AG04450 (cell line): ENCODE measurements at regions of chr6 and their contacts with region 1.

Region 1: GRCh38 chr6:43769526-43770416 is at the start of gene VEGFA:
- DNase-seq: peak; percentile 70
- H3K4me3 ChIP-seq: peak within 1 kb of the TSS; percentile 96
- H3K27ac ChIP-seq: peak within 1 kb of the TSS; percentile 85
- H3K27me3 ChIP-seq: no peaks in the 10 kb centered on the region
- CTCF ChIP-seq: peak; percentile 99
- polyA plus RNA-seq, gene VEGFA: 189 and 239 TPM in 2 replicates

Region 2: DNA sequence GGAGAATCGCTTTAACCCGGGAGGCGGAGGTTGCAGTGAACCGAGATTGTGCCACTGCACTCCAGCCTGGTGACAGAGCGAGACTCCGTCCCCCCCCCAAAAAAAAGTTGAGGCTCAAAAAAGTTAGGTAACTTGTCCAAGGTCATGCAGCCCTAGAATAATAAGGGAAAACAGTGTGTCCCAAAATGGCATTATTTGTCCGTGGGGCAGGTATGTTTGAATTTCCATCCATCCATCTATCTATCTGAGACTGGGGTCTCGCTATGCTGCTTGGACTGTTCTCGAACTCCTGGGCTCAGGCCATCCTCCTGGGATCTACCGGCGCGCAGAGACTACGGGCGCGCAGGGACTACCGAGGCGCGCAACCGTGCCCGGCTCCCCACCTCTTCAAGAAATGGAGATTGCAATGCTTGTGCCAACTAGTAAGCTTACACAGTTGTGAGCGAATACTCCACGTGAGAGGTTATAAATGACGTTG is 342.8 kb before region 1 on chr6:
- CTCF ChIA-PET with region 1: no interaction called
- POLR2A ChIA-PET with region 1: no interaction called
- DNase-seq: no peak
- H3K4me3 ChIP-seq: peak overlapping the region; percentile 99
- H3K27ac ChIP-seq: peak overlapping the region; percentile 90
- H3K27me3 ChIP-seq: no peaks in the 10 kb centered on the region
- CTCF ChIP-seq: no peak

Region 3: GRCh38 chr6:43608310-43608763 is 161.4 kb before region 1 on chr6:
- CTCF ChIA-PET with region 1: interaction called, 11 read pairs
- POLR2A ChIA-PET with region 1: no interaction called
- DNase-seq: peak; percentile 61
- H3K4me3 ChIP-seq: no peak overlapping the region
- H3K27ac ChIP-seq: no peak overlapping the region
- H3K27me3 ChIP-seq: no peaks in the 10 kb centered on the region
- CTCF ChIP-seq: peak; percentile 93

Region 4: DNA sequence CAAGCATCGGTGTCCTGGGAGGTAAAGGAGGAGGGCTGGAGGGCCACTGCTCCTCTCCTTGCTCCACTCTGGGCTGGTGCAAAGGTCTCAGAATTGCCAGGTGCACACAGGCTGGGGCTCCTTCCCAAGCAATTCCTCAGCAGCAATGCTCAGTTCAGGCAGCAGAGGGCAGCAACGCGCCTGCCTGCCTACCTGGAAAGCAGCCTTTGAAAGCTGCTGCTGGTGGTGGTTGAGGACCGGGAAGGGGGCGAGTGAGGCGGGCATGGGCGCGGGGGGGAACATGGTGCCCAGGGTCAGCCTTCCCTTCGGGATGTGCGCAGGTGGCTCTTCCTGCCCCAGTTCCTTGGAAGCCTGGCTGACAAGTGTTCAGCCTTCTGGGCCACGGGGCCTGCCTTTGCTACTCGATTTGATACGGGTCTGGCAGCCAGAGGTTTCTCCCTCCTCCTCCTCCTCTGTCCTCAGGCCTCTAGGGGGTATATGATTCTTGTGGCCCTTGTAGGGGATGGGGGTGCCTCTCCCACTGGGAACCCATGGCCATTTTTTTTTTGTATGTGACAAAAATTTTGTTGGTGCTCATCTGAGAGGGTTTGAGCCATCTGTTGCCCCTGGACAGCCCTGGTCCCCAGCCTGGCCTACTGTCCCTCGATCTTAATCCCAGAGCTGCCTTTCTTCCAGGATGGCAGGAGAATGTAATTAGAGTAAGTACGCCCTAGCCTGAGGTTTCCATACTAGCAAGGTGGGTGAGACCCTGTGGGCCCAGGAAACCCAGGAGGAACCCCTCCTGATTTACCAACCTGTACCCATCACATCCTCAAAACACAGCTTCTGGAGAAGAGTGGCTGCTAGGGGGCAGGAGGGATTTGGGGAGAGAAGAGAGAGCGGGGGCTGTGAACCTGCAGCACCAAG is 102.3 kb before region 1 on chr6:
- CTCF ChIA-PET with region 1: interaction called, 33 read pairs
- POLR2A ChIA-PET with region 1: interaction called, 8 read pairs
- DNase-seq: no peak
- H3K4me3 ChIP-seq: peak overlapping the region; percentile 36; the same call in 1 of the 2 replicates
- H3K27ac ChIP-seq: peak overlapping the region; percentile 21
- H3K27me3 ChIP-seq: peaks cover 5% of the 10 kb centered on the region
- CTCF ChIP-seq: peak; percentile 97

Region 5: GRCh38 chr6:43705996-43706395 is 63.8 kb before region 1 on chr6:
- CTCF ChIA-PET with region 1: interaction called, 13 read pairs
- POLR2A ChIA-PET with region 1: interaction called, 4 read pairs
- DNase-seq: no peak
- H3K4me3 ChIP-seq: no peak overlapping the region
- H3K27ac ChIP-seq: peak overlapping the region; percentile 57
- H3K27me3 ChIP-seq: no peaks in the 10 kb centered on the region
- CTCF ChIP-seq: no peak

Region 6: GRCh38 chr6:43746613-43747102 is 23.1 kb before region 1 on chr6:
- CTCF ChIA-PET with region 1: interaction called, 17 read pairs
- POLR2A ChIA-PET with region 1: interaction called, 4 read pairs
- DNase-seq: no peak
- H3K4me3 ChIP-seq: no peak overlapping the region
- H3K27ac ChIP-seq: no peak overlapping the region
- H3K27me3 ChIP-seq: peaks cover 29% of the 10 kb centered on the region
- CTCF ChIP-seq: no peak

Region 7: GRCh38 chr6:43789447-43789846 is 19.7 kb after region 1 on chr6:
- CTCF ChIA-PET with region 1: interaction called, 15 read pairs
- POLR2A ChIA-PET with region 1: interaction called, 12 read pairs
- DNase-seq: no peak
- H3K4me3 ChIP-seq: no peak overlapping the region
- H3K27ac ChIP-seq: no peak overlapping the region
- H3K27me3 ChIP-seq: no peaks in the 10 kb centered on the region
- CTCF ChIP-seq: no peak

Region 8: GRCh38 chr6:44074439-44075136 is 304.8 kb after region 1 on chr6:
- CTCF ChIA-PET with region 1: interaction called, 94 read pairs
- POLR2A ChIA-PET with region 1: interaction called, 40 read pairs
- DNase-seq: peak; percentile 61
- H3K4me3 ChIP-seq: no peak overlapping the region
- H3K27ac ChIP-seq: peak overlapping the region; percentile 21
- H3K27me3 ChIP-seq: no peaks in the 10 kb centered on the region
- CTCF ChIP-seq: peak; percentile 93